HEK293T (cell line): ENCODE measurements at regions of chr12 and their contacts with region 1.

Region 1: DNA sequence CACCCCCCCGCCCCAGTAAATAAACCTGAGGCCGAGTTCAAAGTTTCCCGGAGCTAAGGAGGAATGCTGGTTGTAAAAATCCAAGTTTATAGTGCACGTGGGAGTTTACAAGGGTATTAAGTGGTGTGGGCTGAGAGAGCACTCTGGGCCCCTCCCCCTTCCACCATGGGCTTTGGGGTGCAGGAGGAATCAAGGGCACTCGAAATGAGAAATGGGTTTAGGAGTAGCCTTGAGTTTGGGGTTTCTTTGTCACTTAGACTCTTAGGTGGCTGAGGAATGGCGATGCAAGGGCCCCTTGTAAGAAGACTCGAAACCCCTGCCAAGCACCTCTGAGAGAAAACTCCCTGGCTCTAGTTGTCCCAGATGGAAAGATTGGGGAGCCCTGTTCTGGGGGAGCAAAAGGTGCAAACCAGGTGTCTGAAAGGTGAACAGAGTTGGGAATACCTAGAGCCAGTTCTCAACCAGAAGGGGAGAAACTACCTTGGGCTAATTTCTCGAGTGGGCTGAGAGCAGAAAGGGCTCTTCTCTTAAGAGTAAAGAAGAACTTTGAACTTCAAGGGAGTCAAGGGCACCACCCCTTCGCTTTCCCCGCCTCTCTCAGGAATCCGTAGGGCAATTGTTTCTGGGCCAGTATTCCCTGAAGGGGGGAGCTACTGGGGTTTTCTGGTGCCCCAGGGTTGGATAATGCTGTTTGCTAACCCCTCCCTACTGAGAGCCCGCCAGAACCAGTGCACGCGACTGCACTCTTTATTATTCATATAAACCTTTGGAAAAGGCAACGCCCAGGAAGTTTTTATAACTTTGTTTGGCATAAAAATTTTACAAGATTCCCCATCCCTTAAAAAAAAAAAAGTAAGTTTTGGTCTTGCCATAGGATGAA is 4.0 kb upstream of the HOTAIR start:
- DNase-seq: no peak

Region 2: DNA sequence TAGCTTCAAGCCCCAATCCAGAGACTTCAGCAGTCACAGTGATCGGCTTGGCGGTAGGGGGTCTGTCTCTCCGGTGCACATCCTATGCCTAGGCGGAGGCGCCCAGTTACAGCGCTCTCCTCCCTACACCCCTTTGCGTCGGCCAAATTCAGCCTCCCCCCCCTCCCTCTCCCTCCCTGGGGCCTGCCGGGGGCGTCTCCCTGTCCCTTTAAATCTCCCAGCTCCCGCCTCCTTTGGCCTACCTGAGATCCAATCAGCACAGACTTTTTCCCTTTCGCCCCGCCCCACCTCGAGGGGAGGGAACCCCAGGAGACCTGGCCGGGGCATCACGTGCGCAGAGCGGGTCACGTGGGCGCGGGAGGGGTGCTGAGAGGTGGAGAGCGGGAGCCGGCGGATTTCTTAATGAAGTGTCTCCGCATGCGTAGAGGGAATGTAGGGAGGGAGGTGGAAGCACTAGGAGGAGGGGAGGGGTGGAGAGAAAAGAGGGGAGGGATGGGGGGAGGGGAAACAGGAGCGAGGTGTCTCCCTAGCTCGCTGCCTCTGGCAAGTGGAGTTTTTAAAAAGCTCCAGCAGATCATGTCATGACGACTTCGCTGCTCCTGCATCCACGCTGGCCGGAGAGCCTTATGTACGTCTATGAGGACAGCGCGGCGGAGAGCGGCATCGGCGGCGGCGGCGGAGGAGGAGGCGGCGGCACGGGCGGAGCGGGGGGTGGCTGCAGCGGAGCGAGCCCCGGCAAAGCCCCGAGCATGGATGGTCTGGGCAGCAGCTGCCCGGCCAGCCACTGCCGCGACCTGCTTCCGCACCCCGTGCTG is 40.2 kb before region 1 on chr12 and contains the start of gene HOXC13:
- CTCF ChIA-PET with region 1: interaction called, 4 read pairs
- POLR2A ChIA-PET with region 1: interaction called, 10 read pairs
- DNase-seq: peak; percentile 98

Region 3: GRCh38 chr12:53963434-53964314 is 15.0 kb before region 1 on chr12:
- CTCF ChIA-PET with region 1: interaction called, 4 read pairs
- POLR2A ChIA-PET with region 1: interaction called, 12 read pairs
- DNase-seq: peak; percentile 38